ENCODE measurements at regions of chr6 and their contacts with region 1.

Region 1: DNA sequence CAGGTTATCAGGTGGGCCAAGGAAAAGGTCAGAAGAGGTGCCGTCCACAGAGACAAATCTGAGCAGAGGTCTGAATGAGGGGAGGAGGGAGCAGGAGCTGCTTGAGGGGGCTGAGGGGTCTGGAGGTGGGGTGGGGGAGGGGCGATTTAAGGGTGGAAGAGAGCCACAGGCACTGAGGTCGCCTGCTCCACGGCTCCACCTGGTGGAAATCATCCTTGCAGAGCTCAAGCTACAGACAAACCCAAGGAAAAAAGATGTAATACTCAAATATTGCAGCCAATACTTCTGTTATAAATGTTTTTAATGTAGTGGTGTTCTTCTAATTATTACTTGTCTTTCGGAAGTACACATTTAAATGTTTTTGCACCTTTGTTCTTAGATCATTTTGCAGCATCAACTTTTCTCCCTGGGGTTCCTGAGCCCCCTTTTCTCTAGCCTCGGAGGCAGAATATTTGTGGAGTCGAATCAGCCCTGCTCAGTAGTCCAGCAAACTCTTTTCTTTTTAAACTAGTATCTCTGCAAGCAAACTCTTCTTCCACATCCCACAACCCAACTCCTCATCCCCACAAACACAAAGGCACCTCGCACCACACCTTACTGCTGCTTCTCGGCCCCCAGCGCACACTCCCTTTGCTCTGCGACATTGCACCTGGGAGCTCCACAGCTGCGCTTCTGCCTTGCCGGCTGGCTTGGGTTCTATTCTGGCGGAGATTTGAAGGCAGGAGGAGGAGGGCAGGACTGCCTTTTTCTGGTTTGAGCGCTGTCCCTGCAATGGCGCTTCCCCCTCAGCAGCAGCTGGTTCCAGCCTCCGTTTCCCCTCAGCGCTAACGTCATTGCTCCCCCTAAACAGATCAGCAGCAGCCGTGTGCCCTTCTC is 51.0 kb upstream of the TFAP2A start:
- DNase-seq: peak; percentile 83
- ATAC-seq: peak; percentile 85
- H3K4me3 Mint-ChIP-seq: peak overlapping the region; percentile 19
- H3K27ac Mint-ChIP-seq: no peak overlapping the region
- H3K4me1 Mint-ChIP-seq: peaks cover 15% of the 10 kb centered on the region
- H3K27me3 Mint-ChIP-seq: peaks cover 10% of the 10 kb centered on the region; the same call in 1 of the 2 replicates
- CTCF ChIP-seq: peak; percentile 40; the same call in 1 of the 2 replicates

Region 2: GRCh38 chr6:9532571-9533557 is 933.0 kb before region 1 on chr6:
- CTCF ChIA-PET with region 1: no interaction called
- POLR2A ChIA-PET with region 1: no interaction called
- DNase-seq: no peak
- ATAC-seq: no peak
- H3K4me3 Mint-ChIP-seq: no peak overlapping the region
- H3K27ac Mint-ChIP-seq: no peak overlapping the region
- H3K4me1 Mint-ChIP-seq: no peaks in the 10 kb centered on the region
- H3K27me3 Mint-ChIP-seq: no peaks in the 10 kb centered on the region; the same call in 1 of the 2 replicates
- CTCF ChIP-seq: no peak

Region 3: DNA sequence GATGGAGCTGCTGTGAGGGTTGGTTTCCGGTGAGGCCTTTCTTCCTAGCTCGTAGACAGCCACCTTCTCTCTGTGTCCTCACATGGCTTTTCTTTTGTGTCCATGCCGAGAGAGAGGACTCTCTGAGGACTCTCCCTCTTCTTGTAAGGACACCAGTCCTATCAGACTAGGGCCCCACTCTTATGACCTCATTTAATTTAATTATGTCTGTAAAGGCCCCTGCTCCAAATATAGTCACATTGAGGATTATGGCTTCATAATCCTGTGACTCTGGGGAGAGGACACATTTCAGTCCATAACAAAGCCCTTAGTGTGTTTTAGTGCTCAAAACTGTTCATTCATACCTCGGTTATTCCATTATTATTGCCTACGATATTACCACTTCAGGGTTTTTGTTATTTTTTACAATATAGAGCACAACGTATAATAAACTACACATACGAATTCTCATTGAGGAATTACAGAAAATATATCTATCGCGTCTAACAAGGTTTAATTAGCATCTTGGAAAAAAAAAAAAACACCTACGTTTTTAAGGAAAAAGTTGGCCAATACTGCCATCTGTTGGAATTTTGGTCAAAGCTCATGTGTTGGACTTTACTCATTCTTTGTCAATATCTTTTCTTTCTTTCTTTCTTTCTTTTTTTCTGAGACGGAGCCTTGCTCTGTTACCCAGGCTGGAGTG is 31.0 kb before region 1 on chr6:
- CTCF ChIA-PET with region 1: interaction called, 12 read pairs
- POLR2A ChIA-PET with region 1: no interaction called
- DNase-seq: no peak
- ATAC-seq: peak; percentile 79
- H3K4me3 Mint-ChIP-seq: peak overlapping the region; percentile 34; the same call in 1 of the 2 replicates
- H3K27ac Mint-ChIP-seq: no peak overlapping the region
- H3K4me1 Mint-ChIP-seq: peaks cover 28% of the 10 kb centered on the region
- H3K27me3 Mint-ChIP-seq: peaks cover 16% of the 10 kb centered on the region
- CTCF ChIP-seq: peak; percentile 68

Region 4: DNA sequence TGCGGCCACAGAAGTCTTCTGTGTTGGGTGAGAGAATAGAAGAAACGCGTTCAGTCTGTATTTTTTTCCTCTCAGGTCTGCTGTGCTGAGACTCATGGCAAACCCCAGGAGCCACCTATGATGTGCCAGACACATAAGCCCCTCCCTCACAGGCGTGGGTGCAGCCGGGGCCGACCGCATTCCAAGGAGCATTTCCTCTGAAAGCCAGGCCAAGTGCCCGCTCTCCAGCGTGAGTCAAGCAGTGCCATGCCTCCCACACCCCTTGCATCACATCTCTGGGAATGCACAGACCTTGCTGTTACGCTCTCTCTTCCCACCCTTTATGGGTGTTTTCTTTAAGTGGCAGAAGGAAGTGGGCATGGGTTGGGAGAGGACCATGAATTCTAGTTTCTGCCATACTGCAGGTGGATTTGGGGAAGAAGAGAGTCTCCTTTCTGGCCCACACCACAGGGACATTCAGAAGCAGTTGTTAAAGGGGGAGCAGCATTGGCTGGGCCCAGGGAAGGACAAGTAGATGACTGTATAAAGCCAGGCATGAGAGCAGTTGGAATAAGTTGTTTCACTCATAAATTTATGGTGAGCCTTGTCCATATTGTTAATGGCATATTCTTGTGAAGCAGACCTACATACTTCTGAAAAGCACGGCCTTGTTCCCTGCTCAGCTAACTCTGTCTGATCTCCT is 13.9 kb before region 1 on chr6:
- CTCF ChIA-PET with region 1: interaction called, 49 read pairs
- POLR2A ChIA-PET with region 1: interaction called, 3 read pairs
- DNase-seq: no peak
- ATAC-seq: peak; percentile 59
- H3K4me3 Mint-ChIP-seq: no peak overlapping the region
- H3K27ac Mint-ChIP-seq: no peak overlapping the region
- H3K4me1 Mint-ChIP-seq: no peaks in the 10 kb centered on the region
- H3K27me3 Mint-ChIP-seq: no peaks in the 10 kb centered on the region
- CTCF ChIP-seq: no peak